Posterior cingulate gyrus (tissue), 11 donors: ENCODE measurements at regions of chr17 and their contacts with region 1.

Region 1: GRCh38 chr17:61927200-61928165 is at the start of gene INTS2:
- DNase-seq: peak; percentile 92 to 99 (median 96)

Region 2: GRCh38 chr17:61511480-61512182 is 415.9 kb before region 1 on chr17:
- intact Hi-C with region 1: no loop called
- DNase-seq: no peak

Region 3: DNA sequence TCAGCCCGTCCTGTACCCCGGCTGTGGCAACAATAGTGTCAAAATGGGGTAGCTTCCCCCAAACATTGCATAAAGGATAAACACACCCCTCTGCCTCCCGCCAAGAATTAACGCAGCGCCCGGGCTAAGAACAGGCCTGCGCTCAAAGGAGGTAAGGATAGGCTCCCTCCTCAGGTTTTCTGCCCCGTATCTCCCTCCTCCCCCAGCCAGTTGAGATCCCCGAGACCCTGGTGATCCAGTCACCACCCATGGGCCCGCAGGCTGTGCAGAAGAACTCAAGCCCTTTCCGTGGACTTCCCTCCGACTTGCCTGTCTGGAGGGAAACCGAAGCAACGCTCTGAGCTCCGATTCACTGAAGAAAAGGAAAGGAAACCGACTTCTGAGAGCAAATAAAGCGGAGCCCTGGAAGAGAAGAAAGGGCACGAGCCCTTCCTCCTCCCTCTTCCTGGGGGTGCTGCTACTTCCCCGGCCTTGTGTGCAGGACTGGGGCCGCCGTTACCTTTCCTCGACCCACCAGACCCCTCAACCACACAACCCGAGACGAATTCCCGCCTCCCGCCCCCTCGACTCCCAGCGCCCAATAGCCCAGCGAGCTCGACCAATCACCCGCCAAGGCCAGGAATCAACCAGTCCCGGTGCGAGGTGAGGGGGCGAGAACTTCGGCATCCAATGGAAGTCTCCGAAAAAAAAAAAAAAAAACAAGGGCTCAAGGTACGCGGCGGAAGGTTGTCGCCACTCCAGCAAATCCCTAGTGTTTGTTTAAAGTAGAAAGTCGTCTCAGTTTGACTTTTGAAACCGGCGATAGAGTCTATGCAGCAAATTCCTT is 64.3 kb before region 1 on chr17 and contains the start of gene BRIP1:
- intact Hi-C with region 1: loop called (anchors 10 kb)
- DNase-seq: peak; percentile 75 to 97 (median 86)

Region 4: DNA sequence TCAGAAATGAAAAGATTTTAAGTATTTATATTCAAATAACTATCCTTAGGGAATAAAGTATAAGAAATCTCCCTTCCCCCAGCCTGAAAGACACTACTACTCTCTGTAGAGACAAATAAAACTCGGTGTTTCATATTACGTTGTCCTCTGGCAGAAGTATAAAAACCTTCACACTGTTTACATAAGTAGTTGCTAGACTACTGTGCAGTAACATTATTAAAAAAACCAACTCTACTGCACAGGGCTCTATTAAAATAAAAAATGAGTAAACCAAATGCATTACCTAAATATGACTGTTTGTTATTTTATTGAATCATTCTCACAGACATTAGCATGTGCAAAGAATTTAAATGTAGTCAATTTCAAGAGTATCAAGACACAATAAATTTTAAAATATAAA is 70.2 kb after region 1 on chr17:
- intact Hi-C with region 1: no loop called
- DNase-seq: no peak

Region 5: DNA sequence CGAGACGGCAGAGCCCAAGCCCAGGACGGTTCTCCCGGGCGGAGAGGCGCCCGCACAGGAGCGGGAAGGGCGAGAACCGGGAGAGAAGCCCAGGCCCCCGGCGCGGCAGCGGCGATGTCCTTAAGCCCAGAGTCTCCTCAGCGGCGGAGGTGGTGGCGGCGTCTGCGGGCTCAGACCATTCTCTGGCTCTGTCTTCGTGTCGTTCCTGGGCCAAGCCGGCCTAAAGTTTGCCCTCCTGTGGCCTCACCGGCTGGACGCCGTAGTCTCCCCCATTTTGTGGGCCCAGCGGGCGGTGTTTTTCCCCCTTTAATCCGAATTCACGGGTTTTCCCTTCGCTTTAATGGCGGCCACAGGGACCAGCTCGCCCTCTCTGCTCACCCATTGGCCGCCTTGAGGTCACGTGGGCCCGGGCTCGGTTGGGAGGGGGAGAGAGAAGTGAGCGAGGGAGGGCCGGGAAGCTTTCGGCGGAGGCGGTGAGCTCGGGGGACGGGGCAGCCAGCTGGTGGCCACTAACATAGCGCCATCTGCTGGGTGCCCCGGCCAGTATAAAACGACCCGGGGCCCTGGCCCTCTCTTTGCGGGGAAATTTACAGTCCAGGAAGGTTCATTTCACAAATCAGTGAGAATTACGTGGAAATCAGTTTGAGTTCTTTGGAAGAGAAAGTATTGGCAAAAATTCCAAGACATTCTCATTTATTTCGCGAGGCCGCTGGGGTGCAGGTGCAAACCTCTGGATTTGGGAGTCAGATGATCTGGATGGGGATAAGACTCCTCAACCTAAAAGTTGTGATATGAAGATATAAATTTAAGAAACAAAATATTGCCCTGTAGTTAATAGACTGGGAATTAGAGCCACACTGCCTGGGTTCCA is 138.3 kb after region 1 on chr17:
- intact Hi-C with region 1: loop called (anchors 1 kb)
- DNase-seq: peak; percentile 98 to 100 (median 99)